CD8-positive, alpha-beta memory T cell (primary cell): ENCODE measurements at regions of chr2 and their contacts with region 1.

Region 1: DNA sequence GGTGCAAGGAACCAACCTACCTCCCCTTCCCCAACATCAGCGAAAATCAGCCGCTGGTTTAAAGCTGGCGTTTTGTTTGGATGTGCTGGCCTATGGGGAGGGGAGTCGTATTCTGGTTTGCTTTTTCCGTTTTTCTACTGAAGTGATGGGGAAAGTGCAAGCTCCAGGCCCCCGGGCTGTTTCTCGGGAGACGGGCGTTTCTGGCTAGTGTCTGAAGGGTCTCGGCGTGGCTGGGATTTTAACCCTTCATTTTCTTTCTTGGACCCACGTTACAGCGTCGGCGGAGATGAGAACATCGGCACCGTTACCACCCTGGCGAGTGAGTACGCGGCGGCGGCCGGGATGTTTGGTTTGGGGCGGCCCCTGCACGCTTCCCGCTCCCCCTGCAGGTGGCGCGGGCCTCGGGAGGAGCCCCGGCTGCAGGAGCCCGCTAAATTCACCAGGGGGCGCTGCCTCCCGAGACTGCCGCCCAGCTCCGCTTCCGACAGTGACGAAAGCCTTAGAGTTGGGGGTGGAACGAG is 70.7 kb downstream of the PLB1 start:
- DNase-seq: peak; percentile 83 to 90 (median 86)
- H3K4me3 ChIP-seq: peak overlapping the region; percentile 66
- H3K4me3 Mint-ChIP-seq: peak overlapping the region; percentile 91 to 97 (median 92)
- H3K27ac ChIP-seq: no peak overlapping the region
- H3K27ac Mint-ChIP-seq: peak overlapping the region; percentile 32 to 98 (median 92)
- H3K4me1 ChIP-seq: peaks cover 11% of the 10 kb centered on the region
- H3K4me1 Mint-ChIP-seq: peaks cover 15 to 21% (median 18%) of the 10 kb centered on the region in 3 donors
- H3K27me3 ChIP-seq: no peaks in the 10 kb centered on the region
- H3K27me3 Mint-ChIP-seq: peaks cover 1 to 3% of the 10 kb centered on the region in 2 donors

Region 2: GRCh38 chr2:28356095-28356911 is 210.3 kb before region 1 on chr2:
- CTCF ChIA-PET with region 1: no interaction called
- POLR2A ChIA-PET with region 1: no interaction called
- DNase-seq: peak in 4 of 5 donors; percentile 26 to 64 (median 36)
- H3K4me3 ChIP-seq: no peak overlapping the region
- H3K4me3 Mint-ChIP-seq: peak overlapping the region in 1 of 7 donors; percentile 24
- H3K27ac ChIP-seq: peak overlapping the region; percentile 51
- H3K27ac Mint-ChIP-seq: peak overlapping the region in 7 of 8 donors; percentile 87 to 97 (median 92)
- H3K4me1 ChIP-seq: peaks cover 44% of the 10 kb centered on the region
- H3K4me1 Mint-ChIP-seq: peaks cover 40 to 54% (median 45%) of the 10 kb centered on the region in 3 donors
- H3K27me3 ChIP-seq: no peaks in the 10 kb centered on the region
- H3K27me3 Mint-ChIP-seq: peaks cover 0 to 5% of the 10 kb centered on the region in 2 donors

Region 3: DNA sequence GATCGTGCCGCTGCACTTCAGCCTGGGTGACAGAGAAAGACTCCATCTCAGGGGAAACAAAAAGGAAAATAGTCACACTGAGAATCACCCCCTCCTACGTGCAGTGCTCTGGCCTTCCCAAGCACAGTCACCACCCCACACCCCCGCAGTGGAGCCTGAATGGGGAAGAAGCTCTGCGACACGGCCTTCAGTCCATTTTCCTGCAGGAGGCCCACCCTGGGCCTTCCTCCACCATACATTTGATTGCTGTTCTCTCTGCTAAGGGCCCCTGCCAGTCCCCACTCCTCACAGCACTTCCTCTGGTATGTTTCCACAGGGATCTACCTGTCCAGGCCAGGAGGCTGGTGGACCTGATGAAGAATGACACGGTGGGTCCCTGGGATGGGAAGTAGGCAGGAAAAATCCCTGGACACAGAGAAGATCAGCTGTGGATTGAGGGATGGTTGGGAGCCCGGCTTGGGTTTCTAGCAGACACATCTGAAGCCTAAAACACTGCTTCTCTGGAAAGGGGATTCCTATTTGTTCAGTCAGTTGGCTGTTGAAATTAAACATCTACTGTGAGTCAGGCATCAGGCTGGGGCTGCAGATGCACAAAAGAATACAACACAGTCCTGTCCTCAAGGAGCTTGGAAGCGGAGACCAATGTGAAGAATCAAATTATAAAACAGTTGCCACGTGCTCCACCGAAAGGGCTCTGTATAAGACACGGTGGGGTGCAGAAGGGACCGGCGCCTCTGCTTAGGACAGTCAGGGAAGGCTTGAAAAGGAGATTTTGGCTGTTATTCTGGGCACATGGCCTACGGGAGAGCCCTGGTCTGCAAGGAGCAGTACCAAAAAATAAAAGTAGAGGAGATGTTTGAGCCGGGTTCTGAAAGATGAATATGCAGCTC is 11.5 kb after region 1 on chr2:
- CTCF ChIA-PET with region 1: interaction called, 15 read pairs
- POLR2A ChIA-PET with region 1: no interaction called
- DNase-seq: no peak
- H3K4me3 ChIP-seq: no peak overlapping the region
- H3K4me3 Mint-ChIP-seq: no peak overlapping the region
- H3K27ac ChIP-seq: no peak overlapping the region
- H3K27ac Mint-ChIP-seq: peak overlapping the region in 1 of 8 donors; percentile 11
- H3K4me1 ChIP-seq: no peaks in the 10 kb centered on the region
- H3K4me1 Mint-ChIP-seq: no peaks in the 10 kb centered on the region
- H3K27me3 ChIP-seq: no peaks in the 10 kb centered on the region
- H3K27me3 Mint-ChIP-seq: peaks cover 0 to 8% of the 10 kb centered on the region in 2 donors

Region 4: GRCh38 chr2:28586867-28587266 is 20.3 kb after region 1 on chr2:
- CTCF ChIA-PET with region 1: interaction called, 11 read pairs
- POLR2A ChIA-PET with region 1: no interaction called
- DNase-seq: peak; percentile 18 to 79 (median 64)
- H3K4me3 ChIP-seq: no peak overlapping the region
- H3K4me3 Mint-ChIP-seq: peak overlapping the region in 6 of 7 donors; percentile 54 to 80 (median 68)
- H3K27ac ChIP-seq: no peak overlapping the region
- H3K27ac Mint-ChIP-seq: peak overlapping the region in 7 of 8 donors; percentile 2 to 72 (median 51)
- H3K4me1 ChIP-seq: peaks cover 23% of the 10 kb centered on the region
- H3K4me1 Mint-ChIP-seq: peaks cover 22 to 35% (median 25%) of the 10 kb centered on the region in 3 donors
- H3K27me3 ChIP-seq: no peaks in the 10 kb centered on the region
- H3K27me3 Mint-ChIP-seq: peaks cover 6 to 9% of the 10 kb centered on the region in 2 donors